Mammary epithelial cell (primary cell): ENCODE measurements at regions of chr12 and their contacts with region 1.

Region 1: GRCh38 chr12:27733052-27733656 is 22.5 kb downstream of the MRPS35 start:
- DNase-seq: peak; percentile 9
- H3K4me3 ChIP-seq: no peak overlapping the region
- H3K27ac ChIP-seq: no peak overlapping the region
- H3K4me1 ChIP-seq: no peaks in the 10 kb centered on the region
- H3K27me3 ChIP-seq: no peaks in the 10 kb centered on the region
- CTCF ChIP-seq: peak; percentile 91 to 93

Region 2: DNA sequence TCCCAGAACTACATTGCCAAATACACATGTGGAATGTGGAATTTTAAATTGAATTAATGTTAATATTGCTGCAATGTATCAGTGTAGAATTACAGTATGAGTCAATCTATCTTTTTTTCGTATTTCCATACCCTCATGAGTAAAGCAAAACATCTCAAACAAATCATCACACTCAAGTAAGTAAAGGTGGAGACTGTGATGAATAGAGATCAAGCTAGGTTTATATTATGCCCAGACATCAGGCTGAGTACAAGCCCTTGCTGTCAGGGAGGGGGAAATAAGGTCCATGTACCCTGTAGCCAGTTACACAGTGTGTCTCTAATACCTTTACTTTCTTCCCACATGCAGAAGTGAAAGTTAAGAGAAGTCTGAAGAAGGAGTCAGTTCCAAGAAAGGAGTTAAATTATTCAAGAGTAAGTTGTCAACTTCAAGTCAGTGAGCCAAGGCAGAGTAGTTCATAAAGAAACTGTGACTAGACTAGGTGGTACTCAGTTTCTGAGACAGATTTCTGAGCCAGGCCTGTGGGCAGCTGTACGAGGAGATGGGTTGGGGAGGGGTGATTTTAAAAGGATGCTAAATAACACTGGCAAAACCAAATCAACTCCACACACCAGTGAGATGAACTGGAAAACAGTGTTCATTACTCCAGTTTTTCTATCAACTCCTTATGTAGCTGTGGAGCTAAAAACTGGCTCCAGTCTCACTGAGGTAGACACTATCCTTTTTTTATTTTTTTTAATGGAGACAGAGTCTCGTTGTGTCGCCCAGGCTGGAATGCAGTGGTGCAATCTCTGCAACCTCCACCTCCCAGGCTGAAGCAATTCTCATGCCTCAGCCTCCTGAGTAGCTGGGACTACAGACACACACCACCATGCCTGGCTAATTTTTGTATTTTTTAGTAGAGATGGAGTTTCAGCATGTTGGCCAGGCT is 512.8 kb before region 1 on chr12:
- CTCF ChIA-PET with region 1: no interaction called
- dilution Hi-C with region 1: no loop called
- in situ Hi-C with region 1: no loop called
- intact Hi-C with region 1: no loop called
- DNase-seq: no peak
- H3K4me3 ChIP-seq: no peak overlapping the region
- H3K27ac ChIP-seq: no peak overlapping the region
- H3K4me1 ChIP-seq: peaks cover 3% of the 10 kb centered on the region
- H3K27me3 ChIP-seq: no peaks in the 10 kb centered on the region
- CTCF ChIP-seq: no peak

Region 3: GRCh38 chr12:27653661-27654060 is 79.5 kb before region 1 on chr12:
- CTCF ChIA-PET with region 1: no interaction called
- dilution Hi-C with region 1: no loop called
- in situ Hi-C with region 1: no loop called
- intact Hi-C with region 1: no loop called
- DNase-seq: no peak
- H3K4me3 ChIP-seq: no peak overlapping the region
- H3K27ac ChIP-seq: no peak overlapping the region
- H3K4me1 ChIP-seq: peaks cover 10% of the 10 kb centered on the region
- H3K27me3 ChIP-seq: no peaks in the 10 kb centered on the region
- CTCF ChIP-seq: no peak

Region 4: GRCh38 chr12:27785882-27786570 is 52.9 kb after region 1 on chr12:
- CTCF ChIA-PET with region 1: no interaction called
- dilution Hi-C with region 1: no loop called
- in situ Hi-C with region 1: no loop called
- intact Hi-C with region 1: loop called (anchors 1 kb)
- DNase-seq: peak; percentile 83
- H3K4me3 ChIP-seq: no peak overlapping the region
- H3K27ac ChIP-seq: peak overlapping the region; percentile 73
- H3K4me1 ChIP-seq: peaks cover 28% of the 10 kb centered on the region
- H3K27me3 ChIP-seq: no peaks in the 10 kb centered on the region
- CTCF ChIP-seq: no peak

Region 5: DNA sequence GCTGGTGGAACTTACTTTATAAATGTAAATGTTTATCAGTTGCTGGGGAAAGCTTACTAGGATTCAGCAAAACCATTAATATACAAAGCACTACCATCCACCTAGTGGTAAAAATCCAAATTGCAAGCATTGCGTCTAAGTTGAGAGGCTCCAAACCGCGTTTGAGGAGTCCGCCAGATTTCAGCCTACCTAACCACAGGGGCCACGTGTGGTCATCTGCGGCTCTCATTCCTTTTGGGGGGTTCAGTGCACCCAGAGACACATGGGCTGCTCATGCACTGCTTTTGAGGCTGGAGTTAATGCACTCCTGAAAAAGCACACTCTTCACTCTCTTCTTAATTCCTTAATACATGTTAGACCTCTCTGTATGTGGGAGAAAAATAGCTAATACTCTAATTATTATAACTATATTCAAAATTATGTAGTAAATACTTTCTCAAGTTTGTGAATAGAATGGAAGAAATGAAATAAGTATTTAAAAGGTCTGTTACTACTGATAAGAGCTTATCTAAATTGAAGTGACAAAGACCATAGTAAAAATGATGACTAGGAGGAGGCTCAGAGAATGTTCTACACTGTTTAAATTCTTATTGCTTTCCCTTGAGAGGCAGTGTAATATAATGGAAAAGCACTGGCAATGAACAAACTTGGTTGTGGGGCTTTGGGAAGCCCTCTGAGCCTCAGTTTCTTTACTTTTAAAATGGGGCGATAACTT is 88.3 kb after region 1 on chr12:
- CTCF ChIA-PET with region 1: interaction called, 9 read pairs
- dilution Hi-C with region 1: no loop called
- in situ Hi-C with region 1: no loop called
- intact Hi-C with region 1: loop called (anchors 1 kb)
- DNase-seq: peak; percentile 86
- H3K4me3 ChIP-seq: peak overlapping the region in 1 of 3 experiments; percentile 14
- H3K27ac ChIP-seq: peak overlapping the region; percentile 100
- H3K4me1 ChIP-seq: peaks cover 26% of the 10 kb centered on the region
- H3K27me3 ChIP-seq: no peaks in the 10 kb centered on the region
- CTCF ChIP-seq: peak; percentile 81 to 92

Region 6: GRCh38 chr12:27922501-27923139 is 189.5 kb after region 1 on chr12:
- CTCF ChIA-PET with region 1: no interaction called
- dilution Hi-C with region 1: loop called (anchors 25 kb)
- in situ Hi-C with region 1: no loop called
- intact Hi-C with region 1: no loop called
- DNase-seq: peak; percentile 86
- H3K4me3 ChIP-seq: no peak overlapping the region
- H3K27ac ChIP-seq: no peak overlapping the region
- H3K4me1 ChIP-seq: peaks cover 13% of the 10 kb centered on the region
- H3K27me3 ChIP-seq: no peaks in the 10 kb centered on the region
- CTCF ChIP-seq: no peak

Region 7: GRCh38 chr12:28172434-28173030 is 439.4 kb after region 1 on chr12:
- CTCF ChIA-PET with region 1: no interaction called
- dilution Hi-C with region 1: no loop called
- in situ Hi-C with region 1: no loop called
- intact Hi-C with region 1: loop called (anchors 1 kb)
- DNase-seq: peak; percentile 63
- H3K4me3 ChIP-seq: no peak overlapping the region
- H3K27ac ChIP-seq: peak overlapping the region; percentile 23
- H3K4me1 ChIP-seq: peaks cover 12% of the 10 kb centered on the region
- H3K27me3 ChIP-seq: no peaks in the 10 kb centered on the region
- CTCF ChIP-seq: peak; percentile 80 to 85

Region 8: GRCh38 chr12:28998637-28999120 is 1265.5 kb after region 1 on chr12:
- CTCF ChIA-PET with region 1: no interaction called
- dilution Hi-C with region 1: no loop called
- in situ Hi-C with region 1: no loop called
- intact Hi-C with region 1: loop called (anchors 5 kb)
- DNase-seq: peak; percentile 56
- H3K4me3 ChIP-seq: no peak overlapping the region
- H3K27ac ChIP-seq: no peak overlapping the region
- H3K4me1 ChIP-seq: peaks cover 10% of the 10 kb centered on the region
- H3K27me3 ChIP-seq: no peaks in the 10 kb centered on the region
- CTCF ChIP-seq: peak; percentile 51 to 61